Cardiac septum (tissue), 1 donor: ENCODE measurements at regions of chr18 and their contacts with region 1.

Region 1: GRCh38 chr18:23958036-23958435 is 56.5 kb upstream of the TTC39C start:
- DNase-seq: peak; percentile 80

Region 2: DNA sequence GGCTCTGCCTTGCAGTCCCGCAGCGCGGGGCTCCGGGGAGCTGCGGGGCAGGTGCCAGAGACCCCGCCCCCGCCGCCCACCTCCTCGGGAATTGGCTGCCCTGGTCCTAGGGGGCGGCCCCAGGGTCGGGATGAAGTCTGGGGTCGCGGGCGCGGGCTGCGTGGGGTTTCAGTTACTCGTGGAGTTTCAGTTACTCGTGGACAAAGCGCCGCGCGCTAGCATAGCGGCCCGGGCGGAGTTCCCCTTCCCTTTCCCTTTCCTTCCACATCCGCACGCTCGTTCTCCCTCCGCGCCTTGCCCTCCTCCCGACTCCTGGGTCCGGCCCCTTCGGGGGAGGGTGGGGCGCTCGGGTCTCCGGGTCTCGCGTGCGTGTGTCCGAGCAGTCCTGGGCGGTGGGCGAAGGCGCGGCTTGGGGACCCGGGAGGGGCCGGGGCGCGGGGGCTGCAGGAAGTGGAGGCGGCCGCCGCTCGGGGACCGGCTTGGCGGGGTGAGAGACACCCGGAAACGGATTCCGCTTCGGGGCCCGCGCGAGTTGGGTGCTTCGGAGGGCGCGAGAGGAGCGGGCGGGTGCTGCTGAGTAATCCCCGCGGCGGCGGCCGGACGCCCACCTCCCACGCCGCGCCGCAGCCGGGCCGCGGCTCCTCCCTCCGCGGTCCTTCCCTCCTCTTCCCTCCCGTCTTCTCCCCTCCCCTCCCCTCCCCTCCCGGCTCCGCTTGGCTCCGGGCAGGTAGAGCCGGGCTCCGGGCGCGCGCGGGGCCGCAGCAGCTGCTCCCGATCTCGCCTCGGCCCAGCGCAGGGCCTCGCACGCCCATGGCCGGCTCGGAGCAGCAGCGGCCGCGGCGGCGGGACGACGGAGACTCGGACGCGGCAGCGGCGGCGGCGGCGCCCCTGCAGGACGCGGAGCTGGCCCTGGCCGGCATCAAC is 56.3 kb after region 1 on chr18 and contains the start of gene TTC39C:
- intact Hi-C with region 1: loop called (anchors 5 kb)
- DNase-seq: peak; percentile 84
- total RNA-seq, gene TTC39C: 9.2 TPM

Region 3: GRCh38 chr18:24659827-24660720 is 702.0 kb after region 1 on chr18:
- intact Hi-C with region 1: no loop called
- DNase-seq: no peak